Naive thymus-derived CD8-positive, alpha-beta T cell (primary cell): ENCODE measurements at regions of chr2 and their contacts with region 1.

Region 1: GRCh38 chr2:174561283-174561971 is 36.2 kb downstream of the WIPF1 start:
- DNase-seq: no peak
- ATAC-seq: no peak
- H3K4me3 Mint-ChIP-seq: no peak overlapping the region
- H3K27ac Mint-ChIP-seq: peak overlapping the region in 9 of 10 donors; percentile 22 to 84 (median 79)
- H3K4me1 Mint-ChIP-seq: peaks cover 1 to 7% (median 3%) of the 10 kb centered on the region in 4 donors
- H3K27me3 Mint-ChIP-seq: no peaks in the 10 kb centered on the region

Region 2: DNA sequence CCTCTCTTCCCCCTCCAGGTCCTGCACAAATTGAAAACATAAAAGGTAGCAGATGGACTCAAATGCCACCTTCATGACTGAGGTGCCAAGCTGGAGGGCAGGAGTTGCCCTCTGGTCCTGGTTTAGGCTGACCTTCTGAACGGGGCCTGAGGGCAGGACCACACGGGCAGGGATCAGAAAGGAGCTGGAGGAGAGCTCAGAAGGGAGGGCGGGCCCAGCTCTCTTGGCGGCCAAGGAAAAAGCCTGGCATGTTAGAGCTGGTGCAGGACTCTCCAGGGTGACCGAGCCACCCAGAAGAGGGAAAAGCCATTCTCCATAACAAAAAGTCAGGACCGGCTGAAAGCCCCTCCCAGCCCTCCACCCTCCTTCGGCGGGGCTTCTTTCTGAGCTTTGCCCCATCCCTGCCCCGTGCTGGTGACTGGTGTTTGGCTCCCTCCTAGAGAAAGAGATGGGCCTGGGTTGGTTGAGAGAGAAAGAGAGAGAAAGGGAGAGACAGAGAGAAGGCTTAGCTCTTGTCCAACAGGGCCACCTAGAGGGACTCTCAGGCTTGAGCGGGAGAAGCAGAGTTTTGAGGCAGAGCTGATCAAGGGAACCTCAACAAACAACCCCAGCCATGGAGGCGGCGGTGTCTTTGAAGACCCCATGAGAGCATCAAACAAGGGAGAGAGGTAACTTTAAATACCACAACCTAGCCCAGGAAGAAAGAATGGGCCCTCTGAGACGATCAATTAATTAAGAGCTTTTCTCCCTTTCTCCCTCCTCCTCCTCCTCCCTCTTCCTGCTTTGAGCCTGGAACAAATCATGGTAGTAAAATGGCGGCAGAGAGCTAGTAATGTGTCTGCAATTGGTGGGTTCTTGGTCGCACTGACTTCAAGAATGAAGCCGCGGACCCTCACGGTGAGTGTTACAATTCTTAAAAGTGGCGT is 14.6 kb before region 1 on chr2:
- POLR2A ChIA-PET with region 1: interaction called, 12 read pairs
- DNase-seq: peak in 9 of 10 donors; percentile 13 to 67 (median 44)
- ATAC-seq: peak; percentile 72 to 82
- H3K4me3 Mint-ChIP-seq: no peak overlapping the region
- H3K27ac Mint-ChIP-seq: peak overlapping the region; percentile 13 to 85 (median 74)
- H3K4me1 Mint-ChIP-seq: peaks cover 18 to 36% (median 26%) of the 10 kb centered on the region in 4 donors
- H3K27me3 Mint-ChIP-seq: no peaks in the 10 kb centered on the region

Region 3: DNA sequence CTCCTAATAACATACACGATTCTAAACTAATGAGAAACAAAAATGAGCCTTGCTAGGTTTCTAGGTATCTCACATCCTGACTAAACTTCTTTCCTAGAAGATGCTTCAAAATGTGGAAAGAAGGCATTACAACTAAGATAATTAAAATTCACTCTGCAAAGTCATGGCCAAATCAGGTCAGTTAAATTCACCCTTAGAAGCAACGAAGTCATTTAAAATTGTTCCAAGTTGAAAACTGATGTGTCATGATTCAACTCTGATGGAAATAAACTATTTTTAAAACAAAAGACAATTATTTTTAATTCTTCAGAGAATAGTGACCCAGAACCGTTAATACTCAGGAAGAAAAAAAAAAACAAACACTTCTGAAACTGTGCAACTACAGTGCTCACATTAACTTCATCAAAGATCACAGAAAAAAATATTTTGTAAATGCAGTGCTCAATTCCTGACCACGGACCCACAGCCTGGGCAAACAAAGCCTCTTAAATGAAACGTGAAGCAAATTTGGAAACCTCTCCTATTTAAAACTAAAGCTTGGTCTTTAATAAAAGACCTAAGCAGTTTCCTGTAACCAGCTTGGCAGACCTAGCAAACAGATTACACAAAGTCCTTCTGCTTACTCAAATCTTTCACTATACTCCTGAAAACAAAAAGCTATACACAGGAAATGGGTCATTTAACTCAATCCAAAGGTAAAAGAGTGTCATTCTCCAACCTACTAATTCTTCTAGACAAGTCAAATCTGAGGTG is 404.7 kb after region 1 on chr2:
- POLR2A ChIA-PET with region 1: no interaction called
- DNase-seq: no peak
- ATAC-seq: no peak
- H3K4me3 Mint-ChIP-seq: no peak overlapping the region
- H3K27ac Mint-ChIP-seq: no peak overlapping the region
- H3K4me1 Mint-ChIP-seq: peaks cover 6 to 12% (median 9%) of the 10 kb centered on the region in 4 donors
- H3K27me3 Mint-ChIP-seq: peaks cover 0 to 12% (median 0%) of the 10 kb centered on the region in 5 donors